ENCODE measurements at regions of chr2 and their contacts with region 1.

Region 1: DNA sequence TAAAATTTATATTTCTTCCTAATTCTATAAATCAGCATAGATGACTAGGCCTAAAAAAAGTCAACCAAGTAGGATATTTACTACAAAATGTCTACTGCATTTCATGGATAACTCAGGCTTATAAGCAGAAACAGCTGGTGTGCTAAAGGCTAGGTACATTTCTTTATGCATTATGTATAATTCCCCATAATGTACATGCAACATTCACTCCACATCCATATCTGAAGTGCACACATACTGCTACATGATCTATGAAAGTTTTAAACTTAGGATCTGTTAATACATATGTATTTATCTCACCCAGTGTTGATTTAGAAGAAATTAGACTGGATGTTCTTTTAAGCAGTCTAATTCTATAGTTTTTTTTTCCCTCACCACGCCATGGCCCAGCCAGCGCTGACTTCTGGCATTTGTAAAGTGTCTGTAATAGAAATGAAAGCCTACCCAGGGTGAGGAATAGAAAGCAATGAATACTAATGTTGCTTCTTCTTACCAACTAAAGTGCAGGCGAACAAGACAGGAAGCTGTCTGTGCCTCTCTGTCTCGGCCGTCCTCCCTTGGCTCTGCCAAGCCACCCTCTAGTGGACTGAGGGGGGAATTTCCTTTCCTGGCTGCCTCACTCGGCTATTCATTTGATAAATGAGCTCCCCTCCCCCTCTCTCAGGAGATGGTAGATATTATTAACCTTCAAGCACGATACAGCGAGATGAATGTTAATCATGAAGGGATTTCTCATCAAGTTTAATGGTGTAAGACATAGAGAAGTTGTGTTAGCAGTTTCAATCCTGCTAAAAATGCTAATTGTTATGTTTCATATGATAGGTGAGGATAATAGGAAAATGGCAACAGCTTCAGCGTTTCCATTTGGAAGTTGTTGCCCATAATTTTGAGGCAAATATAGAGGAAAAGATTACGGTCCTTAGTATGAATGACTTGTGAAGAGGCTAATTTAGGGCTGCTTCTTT is 384.5 kb downstream of the MTX2 start:
- DNase-seq: peak; percentile 4
- H3K4me3 ChIP-seq: no peak overlapping the region
- H3K27ac ChIP-seq: no peak overlapping the region
- H3K27me3 ChIP-seq: peaks cover 4% of the 10 kb centered on the region
- CTCF ChIP-seq: peak; percentile 75

Region 2: GRCh38 chr2:176096986-176097819 is 556.6 kb before region 1 on chr2:
- CTCF ChIA-PET with region 1: interaction called, 12 read pairs
- POLR2A ChIA-PET with region 1: no interaction called
- DNase-seq: peak; percentile 10
- H3K4me3 ChIP-seq: peak overlapping the region; percentile 49
- H3K27ac ChIP-seq: no peak overlapping the region
- H3K27me3 ChIP-seq: peaks cover 93% of the 10 kb centered on the region
- CTCF ChIP-seq: peak; percentile 85

Region 3: DNA sequence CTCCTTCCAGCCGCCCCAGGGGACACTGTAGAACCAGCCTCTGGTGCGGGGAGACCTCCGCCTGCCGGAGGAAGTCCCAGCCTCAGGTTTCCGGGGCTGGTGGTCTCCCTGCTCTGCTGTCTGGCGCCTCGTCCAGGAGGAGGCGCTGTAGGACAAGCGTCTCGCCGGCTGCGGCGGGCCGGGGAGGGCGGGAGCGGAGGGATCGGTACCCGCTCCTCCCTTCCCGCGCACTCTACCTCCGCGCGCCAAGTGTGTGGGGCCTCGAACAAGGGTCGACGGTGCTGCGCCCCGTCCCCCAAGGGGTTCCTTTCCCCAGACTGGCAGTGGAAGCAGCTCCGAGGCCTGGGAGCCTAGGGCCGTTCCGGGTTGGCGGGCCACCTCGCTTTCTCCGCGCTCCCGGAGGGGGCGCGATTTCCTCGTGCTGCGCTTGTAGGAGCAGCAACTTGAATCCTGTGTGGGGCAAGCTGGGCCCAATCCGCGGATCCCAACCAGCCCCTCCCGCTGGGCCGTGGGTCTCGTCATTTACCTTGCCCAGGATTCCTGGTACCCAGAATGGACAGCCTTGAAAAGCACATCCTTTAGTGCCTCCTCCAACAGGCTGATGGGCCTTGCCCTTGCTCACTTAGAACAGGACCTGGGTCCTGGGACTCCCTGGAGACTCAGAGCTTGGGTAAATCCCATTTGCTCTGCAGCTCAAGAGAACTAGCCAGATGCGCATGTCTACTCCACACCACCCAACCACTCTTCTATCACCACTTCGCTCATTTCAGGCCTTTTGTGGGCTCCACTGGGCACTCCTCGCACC is 513.0 kb before region 1 on chr2:
- CTCF ChIA-PET with region 1: interaction called, 85 read pairs
- POLR2A ChIA-PET with region 1: interaction called, 3 read pairs
- DNase-seq: peak; percentile 4
- H3K4me3 ChIP-seq: peak overlapping the region; percentile 58
- H3K27ac ChIP-seq: no peak overlapping the region
- H3K27me3 ChIP-seq: peaks cover 78% of the 10 kb centered on the region
- CTCF ChIP-seq: peak; percentile 73

Region 4: GRCh38 chr2:176638167-176639015 is 15.4 kb before region 1 on chr2:
- CTCF ChIA-PET with region 1: interaction called, 71 read pairs
- POLR2A ChIA-PET with region 1: no interaction called
- DNase-seq: peak; percentile 6
- H3K4me3 ChIP-seq: peak overlapping the region; percentile 63
- H3K27ac ChIP-seq: no peak overlapping the region
- H3K27me3 ChIP-seq: peaks cover 4% of the 10 kb centered on the region
- CTCF ChIP-seq: peak; percentile 69

Region 5: DNA sequence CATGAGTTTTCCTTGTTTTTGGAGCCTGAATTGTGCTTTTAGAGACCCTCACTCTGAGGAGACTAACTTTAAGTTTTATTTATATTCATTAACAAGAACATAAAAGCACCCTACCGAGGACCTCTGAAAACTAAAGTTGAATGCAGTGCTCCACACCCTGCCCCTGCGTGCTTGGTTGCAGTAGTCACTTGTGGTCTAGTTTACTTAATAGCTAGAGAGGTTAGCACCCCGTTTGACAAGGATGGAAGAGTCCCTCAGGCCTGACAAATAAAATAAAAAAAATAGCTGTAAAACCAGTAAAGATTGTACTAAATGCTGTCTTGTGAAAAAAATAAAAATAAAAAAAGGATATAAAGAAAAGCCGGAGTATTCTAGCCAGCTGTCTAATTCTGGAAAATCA is 10.7 kb after region 1 on chr2:
- CTCF ChIA-PET with region 1: interaction called, 61 read pairs
- POLR2A ChIA-PET with region 1: no interaction called
- DNase-seq: no peak
- H3K4me3 ChIP-seq: no peak overlapping the region
- H3K27ac ChIP-seq: no peak overlapping the region
- H3K27me3 ChIP-seq: peaks cover 6% of the 10 kb centered on the region
- CTCF ChIP-seq: no peak

Region 6: DNA sequence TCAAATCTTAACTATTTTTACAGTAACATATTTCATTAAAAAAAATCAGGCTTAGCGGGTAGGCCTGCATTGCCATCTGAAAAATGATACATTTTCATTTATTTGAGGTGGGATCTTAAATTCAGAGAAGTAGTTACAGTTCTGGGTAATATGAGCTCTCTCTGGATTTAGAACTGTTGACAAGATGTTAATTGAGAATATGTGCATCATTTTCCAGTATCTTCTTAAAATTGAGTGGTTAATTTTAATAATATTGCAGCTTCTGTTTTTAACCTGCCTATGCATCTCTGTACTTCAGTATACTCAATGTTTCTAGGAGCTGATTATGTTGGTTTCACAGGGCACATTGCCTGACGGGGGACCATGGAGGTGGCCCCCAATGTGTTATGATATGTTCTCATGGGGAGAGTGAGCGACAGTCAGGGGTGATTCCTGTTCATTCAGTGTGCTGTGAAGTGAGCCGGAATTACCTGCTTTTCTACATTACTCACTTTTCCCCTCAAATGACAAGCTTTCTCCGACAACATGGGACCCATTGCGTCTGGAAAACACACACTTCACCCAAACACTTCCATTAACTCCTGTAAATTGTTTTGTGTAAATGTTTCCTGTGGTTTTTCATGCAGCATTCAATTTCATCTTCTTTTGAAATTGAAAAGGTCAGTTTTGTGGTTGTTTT is 21.6 kb after region 1 on chr2:
- CTCF ChIA-PET with region 1: interaction called, 25 read pairs
- POLR2A ChIA-PET with region 1: no interaction called
- DNase-seq: no peak
- H3K4me3 ChIP-seq: no peak overlapping the region
- H3K27ac ChIP-seq: no peak overlapping the region
- H3K27me3 ChIP-seq: peaks cover 3% of the 10 kb centered on the region
- CTCF ChIP-seq: no peak

Region 7: DNA sequence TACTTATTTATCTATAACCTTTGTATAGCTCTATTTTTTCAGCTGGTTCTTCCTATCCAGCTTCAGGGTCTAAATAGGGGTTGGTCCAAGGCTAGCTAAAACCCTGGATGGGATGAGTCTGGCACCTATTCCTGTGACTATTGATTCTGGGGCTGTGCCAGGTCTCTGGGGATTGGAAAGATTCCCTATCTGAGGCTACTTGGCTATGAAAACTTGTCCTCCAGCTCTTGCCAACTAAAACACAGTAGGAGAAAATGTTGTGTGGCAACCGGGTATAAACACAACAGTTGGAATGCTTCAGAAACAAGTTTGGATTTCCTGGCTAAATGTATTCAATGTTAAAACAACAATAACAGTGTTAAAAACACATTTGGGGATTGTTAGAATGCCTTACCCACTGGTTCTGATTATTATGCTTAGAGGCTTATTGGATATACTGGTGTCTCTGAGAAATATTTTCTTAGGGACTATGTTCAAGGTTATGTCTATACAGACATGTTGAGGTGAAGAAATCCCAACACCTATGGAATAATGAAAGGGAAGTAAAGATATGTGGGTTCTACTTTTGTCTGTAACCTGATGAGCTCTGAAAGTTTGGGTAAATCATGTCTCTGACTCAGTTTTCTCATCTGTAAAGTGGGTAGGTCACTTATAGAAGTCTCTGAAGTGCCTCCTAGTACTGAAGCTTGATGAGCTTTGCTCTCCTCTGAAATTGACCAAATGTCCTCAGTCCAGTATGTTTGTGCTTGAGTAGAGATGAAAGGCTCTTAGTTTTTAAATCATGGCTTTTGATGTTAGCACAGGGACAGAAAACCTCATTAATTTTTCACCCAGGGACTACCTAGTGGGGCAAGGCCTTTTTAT is 76.2 kb after region 1 on chr2:
- CTCF ChIA-PET with region 1: no interaction called
- POLR2A ChIA-PET with region 1: no interaction called
- DNase-seq: no peak
- H3K4me3 ChIP-seq: no peak overlapping the region
- H3K27ac ChIP-seq: no peak overlapping the region
- H3K27me3 ChIP-seq: no peaks in the 10 kb centered on the region
- CTCF ChIP-seq: no peak

Region 8: GRCh38 chr2:177148477-177149154 is 494.9 kb after region 1 on chr2:
- CTCF ChIA-PET with region 1: interaction called, 31 read pairs
- POLR2A ChIA-PET with region 1: no interaction called
- DNase-seq: no peak
- H3K4me3 ChIP-seq: peak overlapping the region; percentile 61
- H3K27ac ChIP-seq: no peak overlapping the region
- H3K27me3 ChIP-seq: peaks cover 16% of the 10 kb centered on the region
- CTCF ChIP-seq: peak; percentile 97